CD4-positive, alpha-beta memory T cell (primary cell): ENCODE measurements at regions of chr22 and their contacts with region 1.

Region 1: GRCh38 chr22:42805016-42805997 is 51.8 kb downstream of the ARFGAP3 start:
- DNase-seq: no peak
- H3K4me3 ChIP-seq: no peak overlapping the region
- H3K4me3 Mint-ChIP-seq: no peak overlapping the region
- H3K27ac ChIP-seq: no peak overlapping the region
- H3K27ac Mint-ChIP-seq: peak overlapping the region in 2 of 7 donors; percentile 60 to 70
- H3K4me1 ChIP-seq: no peaks in the 10 kb centered on the region
- H3K4me1 Mint-ChIP-seq: no peaks in the 10 kb centered on the region
- H3K27me3 ChIP-seq: no peaks in the 10 kb centered on the region
- H3K27me3 Mint-ChIP-seq: no peaks in the 10 kb centered on the region

Region 2: DNA sequence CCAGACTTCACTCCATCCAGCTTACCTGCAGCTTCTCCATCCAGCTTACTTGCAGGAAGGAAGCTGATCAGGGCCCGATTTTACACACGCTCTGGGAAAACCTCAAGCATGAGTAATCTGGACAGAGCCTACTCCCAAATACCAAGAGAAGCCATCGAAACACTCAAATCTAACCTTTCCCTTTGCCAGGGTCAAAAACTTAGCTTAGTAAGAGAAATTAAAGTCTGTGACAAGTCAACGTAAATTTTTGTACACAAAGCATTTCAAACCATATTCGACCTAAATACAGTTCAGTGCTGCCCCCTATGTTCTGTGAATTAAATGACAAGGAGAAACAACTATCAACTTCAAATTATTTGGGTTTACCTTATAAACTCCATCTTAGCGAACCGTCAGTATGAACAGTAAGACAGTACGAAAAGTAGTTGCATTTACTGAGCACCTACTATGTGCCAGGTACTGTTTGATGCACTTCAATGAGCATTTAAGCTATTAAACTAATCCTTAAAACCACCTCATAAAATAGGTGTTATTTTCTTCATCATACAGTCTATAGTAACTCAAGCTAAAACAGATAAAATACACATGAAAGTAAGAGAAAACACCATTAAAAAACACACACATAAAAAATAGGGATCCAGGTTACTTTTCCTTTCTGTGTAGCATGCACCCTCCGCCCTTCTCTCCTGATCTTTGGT is 14.9 kb after region 1 on chr22:
- CTCF ChIA-PET with region 1: interaction called, 11 read pairs
- POLR2A ChIA-PET with region 1: interaction called, 3 read pairs
- intact Hi-C with region 1: no loop called
- DNase-seq: peak in 2 of 5 donors; percentile 2 to 19
- H3K4me3 ChIP-seq: no peak overlapping the region
- H3K4me3 Mint-ChIP-seq: no peak overlapping the region
- H3K27ac ChIP-seq: no peak overlapping the region
- H3K27ac Mint-ChIP-seq: peak overlapping the region in 3 of 7 donors; percentile 36 to 78 (median 54)
- H3K4me1 ChIP-seq: no peaks in the 10 kb centered on the region
- H3K4me1 Mint-ChIP-seq: peaks cover 0 to 9% (median 1%) of the 10 kb centered on the region in 4 donors
- H3K27me3 ChIP-seq: no peaks in the 10 kb centered on the region
- H3K27me3 Mint-ChIP-seq: no peaks in the 10 kb centered on the region

Region 3: DNA sequence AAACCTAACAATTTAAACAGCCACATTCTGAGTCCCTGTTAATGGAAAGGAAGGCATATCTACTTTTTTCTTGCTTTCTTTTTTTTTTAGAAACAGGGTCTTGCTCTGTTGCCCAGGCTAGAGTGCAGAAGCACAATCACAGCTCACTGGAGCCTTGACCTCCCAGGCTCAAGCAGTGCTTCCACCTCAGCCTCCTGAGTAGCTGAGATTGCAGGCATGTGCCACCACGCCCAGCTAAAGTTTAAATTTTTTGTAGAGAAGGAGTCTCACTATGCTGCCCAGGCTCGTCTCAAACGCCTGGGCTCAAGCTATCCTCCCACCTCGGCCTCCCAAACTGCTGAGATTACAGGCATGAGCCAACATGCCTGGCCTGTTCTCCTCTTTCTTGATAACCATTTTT is 26.4 kb after region 1 on chr22:
- CTCF ChIA-PET with region 1: no interaction called
- POLR2A ChIA-PET with region 1: no interaction called
- intact Hi-C with region 1: no loop called
- DNase-seq: no peak
- H3K4me3 ChIP-seq: no peak overlapping the region
- H3K4me3 Mint-ChIP-seq: no peak overlapping the region
- H3K27ac ChIP-seq: no peak overlapping the region
- H3K27ac Mint-ChIP-seq: peak overlapping the region in 1 of 7 donors; percentile 10
- H3K4me1 ChIP-seq: peaks cover 4% of the 10 kb centered on the region
- H3K4me1 Mint-ChIP-seq: peaks cover 4 to 16% (median 9%) of the 10 kb centered on the region in 4 donors
- H3K27me3 ChIP-seq: no peaks in the 10 kb centered on the region
- H3K27me3 Mint-ChIP-seq: no peaks in the 10 kb centered on the region

Region 4: GRCh38 chr22:42860968-42861367 is 55.7 kb after region 1 on chr22:
- CTCF ChIA-PET with region 1: no interaction called
- POLR2A ChIA-PET with region 1: no interaction called
- intact Hi-C with region 1: no loop called
- DNase-seq: no peak
- H3K4me3 ChIP-seq: no peak overlapping the region
- H3K4me3 Mint-ChIP-seq: no peak overlapping the region
- H3K27ac ChIP-seq: no peak overlapping the region
- H3K27ac Mint-ChIP-seq: peak overlapping the region in 1 of 7 donors; percentile 1
- H3K4me1 ChIP-seq: peaks cover 15% of the 10 kb centered on the region
- H3K4me1 Mint-ChIP-seq: peaks cover 6 to 17% (median 14%) of the 10 kb centered on the region in 4 donors
- H3K27me3 ChIP-seq: no peaks in the 10 kb centered on the region
- H3K27me3 Mint-ChIP-seq: no peaks in the 10 kb centered on the region